ENCODE measurements at regions of chr2 and their contacts with region 1.

Region 1: DNA sequence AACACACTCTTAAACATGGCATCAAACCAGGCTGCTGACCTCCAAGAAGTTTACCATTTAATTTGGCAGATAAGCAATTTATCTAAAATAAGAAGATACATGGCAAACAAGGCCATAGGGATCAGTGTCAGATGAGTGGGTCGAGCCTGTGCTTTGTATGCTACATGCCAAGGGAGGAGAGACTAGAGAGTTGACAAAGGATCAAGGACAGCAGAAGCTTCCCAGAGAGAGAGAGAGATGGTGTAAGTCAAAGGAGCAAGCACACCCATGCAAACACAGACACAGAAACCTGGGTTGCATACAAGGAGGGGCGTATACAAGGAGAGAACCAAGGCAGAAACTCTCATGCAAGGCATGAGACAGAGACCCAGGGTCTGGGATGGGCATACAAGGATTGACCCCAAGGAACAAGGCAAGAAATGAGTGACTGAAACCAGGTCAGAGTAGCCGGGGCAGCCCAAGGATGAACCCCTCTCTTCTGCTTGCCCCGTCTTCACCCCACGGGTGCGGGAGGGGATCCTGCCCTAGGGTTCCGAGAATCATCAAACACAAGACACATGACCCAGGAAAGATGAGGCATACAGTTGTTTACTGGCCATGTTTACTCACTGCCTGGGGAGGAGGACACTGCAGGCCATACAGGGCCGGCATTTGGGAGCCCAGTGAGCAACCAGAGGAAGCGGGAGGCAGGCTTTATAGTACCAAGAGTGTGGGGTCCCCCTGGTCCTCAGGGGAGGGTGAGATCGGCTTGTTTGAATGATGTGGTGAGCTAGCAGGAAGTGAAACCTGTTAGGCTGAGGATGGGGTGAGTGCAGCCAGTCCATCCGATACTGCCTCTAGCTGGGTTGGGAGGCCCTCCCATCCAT is 529.2 kb upstream of the ID2 start:
- DNase-seq: no peak
- ATAC-seq: no peak
- H3K4me3 ChIP-seq: no peak overlapping the region
- H3K27ac ChIP-seq: peak overlapping the region in 1 of 10 donors; percentile 16
- H3K4me1 ChIP-seq: peaks cover 0 to 19% (median 0%) of the 10 kb centered on the region in 9 donors
- H3K27me3 ChIP-seq: no peaks in the 10 kb centered on the region
- CTCF ChIP-seq: no peak

Region 2: GRCh38 chr2:8015848-8016600 is 136.6 kb before region 1 on chr2:
- intact Hi-C with region 1: loop called in 1 of 10 experiments (anchors 10 kb)
- DNase-seq: no peak
- ATAC-seq: no peak
- H3K4me3 ChIP-seq: no peak overlapping the region
- H3K27ac ChIP-seq: no peak overlapping the region
- H3K4me1 ChIP-seq: no peaks in the 10 kb centered on the region
- H3K27me3 ChIP-seq: no peaks in the 10 kb centered on the region
- CTCF ChIP-seq: no peak

Region 3: GRCh38 chr2:8539743-8540551 is 387.3 kb after region 1 on chr2:
- intact Hi-C with region 1: loop called in 1 of 10 experiments (anchors 5 kb)
- DNase-seq: peak in 1 of 2 donors; percentile 44
- ATAC-seq: peak; percentile 11 to 69 (median 33)
- H3K4me3 ChIP-seq: no peak overlapping the region
- H3K27ac ChIP-seq: peak overlapping the region in 7 of 10 donors; percentile 17 to 83 (median 52)
- H3K4me1 ChIP-seq: peaks cover 10 to 100% (median 58%) of the 10 kb centered on the region in 9 donors
- H3K27me3 ChIP-seq: no peaks in the 10 kb centered on the region
- CTCF ChIP-seq: peak in 5 of 9 donors; percentile 9 to 42 (median 23)

Measured in heart right ventricle (tissue), 16 donors.